Gastrocnemius medialis (tissue), 4 donors: ENCODE measurements at regions of chr16 and their contacts with region 1.

Region 1: GRCh38 chr16:9090960-9091866 is at the start of gene HAPSTR1:
- DNase-seq: peak; percentile 100
- ATAC-seq: peak; percentile 91 to 93
- H3K4me3 ChIP-seq: peak within 1 kb of the TSS; percentile 79 to 87 (median 83)
- H3K27ac ChIP-seq: peak within 1 kb of the TSS; percentile 98 to 100 (median 99)
- H3K4me1 ChIP-seq: peaks cover 34 to 42% of the 10 kb centered on the region in 2 donors
- H3K27me3 ChIP-seq: no peaks in the 10 kb centered on the region
- CTCF ChIP-seq: no peak
- POLR2A ChIP-seq: peak; percentile 97 to 99
- total RNA-seq, gene HAPSTR1: 55.0 to 65.0 (median 60.9) TPM

Region 2: DNA sequence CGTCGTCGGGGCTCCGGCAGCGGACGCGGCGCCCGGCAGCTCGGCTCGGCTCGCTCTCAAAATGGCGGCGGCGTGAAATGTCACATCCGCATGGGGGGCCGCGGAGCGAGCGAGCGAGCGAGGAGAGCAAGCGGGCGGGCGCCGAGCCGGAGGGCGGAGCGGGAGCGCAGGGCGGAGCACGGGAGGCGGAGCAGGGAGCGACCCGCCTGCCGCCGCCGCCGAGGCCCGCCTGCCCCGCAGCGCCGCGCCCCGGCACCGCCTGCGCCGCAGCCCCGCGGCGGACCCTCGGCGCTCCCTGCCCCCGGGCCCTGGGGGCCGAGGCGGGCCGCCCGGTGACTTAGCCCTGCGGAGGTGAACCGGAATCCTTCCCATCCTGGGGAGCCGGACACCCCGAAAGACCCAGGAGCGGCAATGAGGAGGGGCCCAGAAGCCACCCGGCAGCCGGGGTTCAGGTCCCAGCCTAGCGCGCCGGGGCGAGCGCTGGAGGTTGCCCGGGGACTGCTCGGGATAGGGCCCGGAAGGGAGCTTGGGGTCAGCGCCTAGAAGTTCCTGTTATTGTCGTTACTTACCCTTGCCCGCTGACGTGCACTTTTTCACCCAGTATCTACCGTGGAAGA is 127.3 kb before region 1 on chr16 and contains the start of gene USP7:
- in situ Hi-C with region 1: loop called in 1 of 4 experiments (anchors 25 kb)
- intact Hi-C with region 1: loop called (anchors 5 kb)
- DNase-seq: peak; percentile 82 to 88
- ATAC-seq: peak; percentile 80 to 85
- H3K4me3 ChIP-seq: peak within 1 kb of the TSS; percentile 63 to 75 (median 70)
- H3K27ac ChIP-seq: peak within 1 kb of the TSS; percentile 80 to 86 (median 84)
- H3K4me1 ChIP-seq: peaks cover 35 to 40% of the 10 kb centered on the region in 2 donors
- H3K27me3 ChIP-seq: no peaks in the 10 kb centered on the region
- CTCF ChIP-seq: no peak
- POLR2A ChIP-seq: peak; percentile 63 to 73
- total RNA-seq, gene USP7: 79.7 to 99.2 (median 85.6) TPM

Region 3: DNA sequence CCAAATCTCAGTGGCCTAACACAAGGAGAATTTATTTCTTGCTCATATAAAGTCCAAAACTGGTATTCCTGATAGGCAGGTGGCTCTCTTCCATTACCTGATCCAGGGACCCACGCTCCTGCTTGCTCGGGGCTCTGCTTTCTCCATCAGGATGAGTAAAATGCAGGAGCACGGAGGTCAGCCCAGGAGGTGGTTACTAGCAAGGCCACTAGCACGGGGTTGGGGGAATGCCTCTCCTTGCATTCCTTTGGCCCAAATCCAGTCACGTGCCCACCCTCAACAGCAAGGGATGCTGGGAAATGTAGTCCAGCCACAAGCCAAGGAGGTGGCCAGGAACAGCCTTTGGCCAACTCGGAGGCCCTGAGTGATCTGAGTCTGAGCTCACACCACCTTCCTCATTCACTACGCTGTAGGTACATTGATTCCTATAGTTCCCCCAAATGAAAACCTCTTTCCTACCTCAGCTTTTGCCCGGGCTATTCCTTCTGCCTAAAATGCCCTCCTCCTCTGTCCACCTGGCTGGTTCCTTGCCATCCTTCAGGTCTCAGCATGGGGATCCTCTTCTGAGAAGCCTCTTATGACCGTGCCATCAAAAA is 38.1 kb before region 1 on chr16:
- in situ Hi-C with region 1: no loop called
- intact Hi-C with region 1: no loop called
- DNase-seq: peak; percentile 50 to 81
- ATAC-seq: peak; percentile 57 to 90
- H3K4me3 ChIP-seq: peak overlapping the region in 1 of 4 donors; percentile 36
- H3K27ac ChIP-seq: peak overlapping the region; percentile 22 to 69 (median 62)
- H3K4me1 ChIP-seq: peaks cover 11 to 28% of the 10 kb centered on the region in 2 donors
- H3K27me3 ChIP-seq: no peaks in the 10 kb centered on the region
- CTCF ChIP-seq: no peak
- POLR2A ChIP-seq: no peak

Region 4: GRCh38 chr16:9072806-9073341 is 18.3 kb before region 1 on chr16:
- in situ Hi-C with region 1: no loop called
- intact Hi-C with region 1: no loop called
- DNase-seq: no peak
- ATAC-seq: peak in 1 of 2 donors; percentile 63
- H3K4me3 ChIP-seq: no peak overlapping the region
- H3K27ac ChIP-seq: no peak overlapping the region
- H3K4me1 ChIP-seq: no peaks in the 10 kb centered on the region
- H3K27me3 ChIP-seq: no peaks in the 10 kb centered on the region
- CTCF ChIP-seq: no peak
- POLR2A ChIP-seq: no peak

Region 5: GRCh38 chr16:10743610-10744393 is 1652.6 kb after region 1 on chr16 and contains the start of gene NUBP1:
- in situ Hi-C with region 1: no loop called
- intact Hi-C with region 1: loop called (anchors 10 kb)
- DNase-seq: peak; percentile 98 to 100
- ATAC-seq: peak; percentile 96 to 97
- H3K4me3 ChIP-seq: peak within 1 kb of the TSS; percentile 64 to 76 (median 71)
- H3K27ac ChIP-seq: peak within 1 kb of the TSS; percentile 94 to 98 (median 96)
- H3K4me1 ChIP-seq: peaks cover 23 to 26% of the 10 kb centered on the region in 2 donors
- H3K27me3 ChIP-seq: no peaks in the 10 kb centered on the region
- CTCF ChIP-seq: no peak
- POLR2A ChIP-seq: peak; percentile 76 to 90
- total RNA-seq, gene NUBP1: 19.2 to 38.5 (median 26.9) TPM